ENCODE measurements at regions of chr5 and their contacts with region 1.

Region 1: DNA sequence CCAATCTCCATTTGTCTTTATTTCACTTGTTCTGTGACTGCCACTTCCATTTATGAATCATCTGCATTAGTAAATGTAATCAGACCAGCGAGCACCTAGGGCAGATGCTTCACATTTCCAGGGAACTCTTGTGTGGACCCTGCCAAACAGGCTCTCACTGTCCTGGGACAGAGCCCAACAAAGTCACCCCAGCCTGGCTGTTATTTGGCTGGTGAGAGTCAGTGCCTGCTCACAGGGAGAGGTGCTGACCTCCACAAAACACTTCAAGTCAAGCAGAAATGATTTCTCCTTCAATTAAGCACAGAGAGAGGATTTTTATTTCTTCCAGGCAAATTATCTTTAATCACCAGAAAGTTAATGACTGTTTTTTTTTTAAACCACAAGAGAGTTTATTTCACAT is 568.0 kb downstream of the MTRR start:
- DNase-seq: no peak
- H3K4me3 ChIP-seq: no peak overlapping the region
- H3K27ac ChIP-seq: no peak overlapping the region
- H3K27me3 ChIP-seq: no peaks in the 10 kb centered on the region
- CTCF ChIP-seq: no peak

Region 2: DNA sequence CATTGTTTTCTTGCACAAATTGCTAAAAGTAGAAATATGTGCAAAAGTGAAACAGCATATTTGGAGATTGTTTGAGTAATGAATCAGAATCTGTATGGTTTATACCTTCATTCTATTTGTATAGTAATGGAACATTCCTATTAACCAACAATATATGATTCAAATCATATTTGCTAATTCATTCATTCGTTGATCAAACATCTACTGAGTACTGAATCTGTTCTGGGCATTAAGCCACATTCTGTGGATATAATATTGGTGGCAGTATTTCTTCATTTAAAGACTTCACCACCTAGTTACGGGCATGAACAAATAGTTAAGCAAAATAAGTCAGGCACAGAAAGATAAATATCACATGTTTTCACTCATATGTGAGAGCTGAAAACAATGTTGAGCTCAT is 182.2 kb before region 1 on chr5:
- intact Hi-C with region 1: no loop called
- DNase-seq: no peak
- H3K4me3 ChIP-seq: no peak overlapping the region
- H3K27ac ChIP-seq: no peak overlapping the region
- H3K27me3 ChIP-seq: peaks cover 0 to 3% (median 0%) of the 10 kb centered on the region in 45 donors
- CTCF ChIP-seq: no peak

Region 3: DNA sequence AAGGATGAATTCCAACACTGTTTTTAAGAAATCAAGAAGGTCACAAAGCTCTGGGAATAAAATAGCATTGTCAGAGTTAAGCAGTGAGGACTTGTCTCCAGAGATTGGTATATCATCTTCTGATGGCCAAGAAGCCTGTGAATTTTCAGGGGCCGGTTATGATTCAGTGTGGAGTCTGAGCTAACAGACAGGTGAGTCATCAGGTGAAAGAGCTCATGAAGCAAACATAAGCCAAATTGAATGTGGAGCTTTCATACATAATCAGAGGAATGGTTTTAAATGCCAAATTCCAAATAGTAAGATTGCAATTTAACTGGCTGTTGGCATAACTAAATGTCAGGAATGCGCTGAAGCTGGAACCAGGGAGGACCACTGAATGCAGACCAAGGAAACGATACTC is 73.8 kb before region 1 on chr5:
- intact Hi-C with region 1: loop called in 1 of 2 experiments (anchors 2 kb)
- DNase-seq: no peak
- H3K4me3 ChIP-seq: no peak overlapping the region
- H3K27ac ChIP-seq: no peak overlapping the region
- H3K27me3 ChIP-seq: no peaks in the 10 kb centered on the region
- CTCF ChIP-seq: no peak

Region 4: DNA sequence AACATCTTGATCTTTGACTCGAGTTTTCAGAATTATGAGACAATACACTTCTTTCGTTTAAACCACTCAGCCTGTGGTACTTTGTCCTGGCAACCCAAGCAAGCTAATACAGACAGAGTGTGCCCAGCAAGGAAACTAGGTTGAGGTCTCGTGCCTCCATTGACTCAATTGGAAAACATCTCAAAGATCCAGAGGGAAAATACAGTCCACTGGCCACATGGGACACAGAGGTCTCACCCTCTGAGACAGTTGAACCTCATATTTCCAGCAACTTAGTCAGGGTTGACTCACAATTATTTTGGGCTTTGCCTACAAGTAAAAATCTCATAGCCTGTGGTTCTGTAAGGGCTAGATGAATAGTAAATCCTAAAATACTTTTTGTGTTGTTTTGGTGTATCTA is 63.5 kb after region 1 on chr5:
- intact Hi-C with region 1: no loop called
- DNase-seq: no peak
- H3K4me3 ChIP-seq: no peak overlapping the region
- H3K27ac ChIP-seq: no peak overlapping the region
- H3K27me3 ChIP-seq: peaks cover 0 to 4% (median 0%) of the 10 kb centered on the region in 45 donors
- CTCF ChIP-seq: no peak

Measured in dorsolateral prefrontal cortex (tissue), 120 donors.